HepG2 (cell line): ENCODE measurements at regions of chr14 and their contacts with region 1.

Region 1: DNA sequence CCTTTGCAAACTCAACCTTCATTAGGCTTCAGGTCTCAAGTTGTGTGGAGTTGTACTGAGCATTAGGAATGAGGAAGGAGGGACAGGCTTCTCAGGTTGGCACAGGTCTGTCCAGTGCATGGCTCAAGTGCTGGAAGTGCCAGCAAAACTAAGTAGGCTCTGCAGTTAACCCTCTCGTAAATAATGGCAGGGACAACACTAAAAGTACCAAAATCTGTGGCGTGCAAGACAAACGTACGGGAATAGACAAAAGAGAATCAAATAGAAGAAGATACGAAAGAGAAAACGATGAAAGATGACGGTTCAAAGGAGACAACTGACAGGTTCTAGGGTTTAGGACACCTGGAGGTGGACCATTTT is 612 bp downstream of the TRAPPC6B start:
- DNase-seq: no peak
- ATAC-seq: peak; percentile 44
- H3K4me3 ChIP-seq: peak overlapping the region; percentile 71 to 96 (median 90)
- H3K27ac ChIP-seq: peak overlapping the region; percentile 86
- H3K4me1 ChIP-seq: peaks cover 63% of the 10 kb centered on the region
- H3K27me3 ChIP-seq: peaks cover 0 to 7% of the 10 kb centered on the region in 2 experiments; a peak in 1 of 5 replicates
- CTCF ChIP-seq: no peak
- EP300 ChIP-seq: no peak
- POLR2A ChIP-seq: no peak
- RAD21 ChIP-seq: no peak

Region 2: GRCh38 chr14:38762426-38762825 is 407.1 kb before region 1 on chr14:
- CTCF ChIA-PET with region 1: no interaction called
- POLR2A ChIA-PET with region 1: no interaction called
- in situ Hi-C with region 1: no loop called
- intact Hi-C with region 1: no loop called
- DNase-seq: no peak
- ATAC-seq: no peak
- H3K4me3 ChIP-seq: no peak overlapping the region
- H3K27ac ChIP-seq: no peak overlapping the region
- H3K4me1 ChIP-seq: no peaks in the 10 kb centered on the region
- H3K27me3 ChIP-seq: no peaks in the 10 kb centered on the region
- CTCF ChIP-seq: no peak
- EP300 ChIP-seq: no peak
- POLR2A ChIP-seq: no peak
- RAD21 ChIP-seq: no peak

Region 3: GRCh38 chr14:39097159-39097558 is 72.4 kb before region 1 on chr14:
- CTCF ChIA-PET with region 1: no interaction called
- POLR2A ChIA-PET with region 1: interaction called, 285 read pairs
- in situ Hi-C with region 1: no loop called
- intact Hi-C with region 1: loop called (anchors 1 kb)
- DNase-seq: peak; percentile 90
- ATAC-seq: peak; percentile 70
- H3K4me3 ChIP-seq: 0 out of 6 replicates have a peak overlapping the region, but pooled peaks of 1 of the 3 experiments have one; percentile 2
- H3K27ac ChIP-seq: peak overlapping the region; percentile 36
- H3K4me1 ChIP-seq: peaks cover 76% of the 10 kb centered on the region
- H3K27me3 ChIP-seq: no peaks in the 10 kb centered on the region; a peak in 1 of 5 replicates
- CTCF ChIP-seq: no peak
- EP300 ChIP-seq: peak in 1 of 2 experiments; percentile 20; a peak in 2 of 4 replicates
- POLR2A ChIP-seq: peak in 1 of 2 experiments; percentile 33; a peak in 1 of 4 replicates
- RAD21 ChIP-seq: no peak

Region 4: DNA sequence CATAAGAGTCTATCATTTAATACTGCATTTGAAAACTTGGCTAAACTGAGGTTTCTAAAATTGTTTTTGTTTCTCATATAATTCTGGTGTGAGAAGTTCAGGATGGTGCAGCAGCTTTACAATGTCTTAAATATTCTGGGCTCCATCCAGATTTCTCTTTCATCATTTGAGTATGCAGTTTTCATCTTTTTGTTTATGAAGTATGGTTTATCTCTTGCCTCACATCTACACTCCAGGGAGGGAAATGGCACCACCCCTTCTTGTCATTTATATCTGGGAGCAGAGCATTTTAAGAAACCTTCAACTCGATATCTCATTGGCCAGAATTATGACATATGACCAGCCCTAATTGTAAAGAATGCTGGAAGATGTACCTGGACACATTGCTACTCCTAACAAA is 31.1 kb before region 1 on chr14:
- CTCF ChIA-PET with region 1: no interaction called
- POLR2A ChIA-PET with region 1: interaction called, 26 read pairs
- in situ Hi-C with region 1: no loop called
- intact Hi-C with region 1: no loop called
- DNase-seq: no peak
- ATAC-seq: no peak
- H3K4me3 ChIP-seq: no peak overlapping the region
- H3K27ac ChIP-seq: no peak overlapping the region
- H3K4me1 ChIP-seq: no peaks in the 10 kb centered on the region
- H3K27me3 ChIP-seq: no peaks in the 10 kb centered on the region
- CTCF ChIP-seq: no peak
- EP300 ChIP-seq: no peak
- POLR2A ChIP-seq: no peak
- RAD21 ChIP-seq: no peak

Region 5: GRCh38 chr14:39181026-39181692 is 11.6 kb after region 1 on chr14:
- CTCF ChIA-PET with region 1: no interaction called
- POLR2A ChIA-PET with region 1: interaction called, 99 read pairs
- in situ Hi-C with region 1: no loop called
- intact Hi-C with region 1: no loop called
- DNase-seq: no peak
- ATAC-seq: peak; percentile 14
- H3K4me3 ChIP-seq: no peak overlapping the region
- H3K27ac ChIP-seq: no peak overlapping the region
- H3K4me1 ChIP-seq: peaks cover 52% of the 10 kb centered on the region
- H3K27me3 ChIP-seq: no peaks in the 10 kb centered on the region
- CTCF ChIP-seq: no peak
- EP300 ChIP-seq: no peak
- POLR2A ChIP-seq: peak; percentile 46 to 48; a peak in 3 of 4 replicates
- RAD21 ChIP-seq: 0 out of 2 replicates have a peak, but pooled peaks have one; percentile 31

Region 6: DNA sequence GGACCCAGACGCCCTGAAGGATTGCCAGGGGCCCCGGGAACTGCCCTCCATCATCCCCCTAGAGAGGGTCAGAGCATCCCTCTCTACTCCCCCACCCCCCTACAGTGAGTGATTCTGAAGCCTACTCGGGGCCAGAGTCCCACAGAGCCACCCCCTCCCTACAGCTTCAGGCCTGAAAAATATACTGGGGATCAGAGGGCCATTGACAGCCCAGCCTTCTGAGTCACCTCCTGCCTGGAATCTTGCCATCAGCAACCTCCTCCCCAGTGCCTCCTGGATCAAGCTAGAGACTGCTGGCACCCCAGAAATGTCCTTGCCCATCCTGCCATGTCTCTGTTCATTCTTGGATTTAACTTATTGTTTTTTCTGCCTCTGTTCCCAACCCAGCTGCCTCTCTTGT is 42.5 kb after region 1 on chr14:
- CTCF ChIA-PET with region 1: no interaction called
- POLR2A ChIA-PET with region 1: interaction called, 15 read pairs
- in situ Hi-C with region 1: no loop called
- intact Hi-C with region 1: no loop called
- DNase-seq: no peak
- ATAC-seq: peak; percentile 67
- H3K4me3 ChIP-seq: no peak overlapping the region
- H3K27ac ChIP-seq: no peak overlapping the region
- H3K4me1 ChIP-seq: peaks cover 24% of the 10 kb centered on the region
- H3K27me3 ChIP-seq: no peaks in the 10 kb centered on the region; a peak in 1 of 5 replicates
- CTCF ChIP-seq: no peak
- EP300 ChIP-seq: no peak
- POLR2A ChIP-seq: no peak
- RAD21 ChIP-seq: no peak

Region 7: GRCh38 chr14:39432179-39432618 is 262.7 kb after region 1 on chr14 and contains the start of gene FBXO33:
- CTCF ChIA-PET with region 1: no interaction called
- POLR2A ChIA-PET with region 1: interaction called, 76 read pairs
- in situ Hi-C with region 1: no loop called
- intact Hi-C with region 1: loop called (anchors 2 kb)
- DNase-seq: peak; percentile 98
- ATAC-seq: peak; percentile 87
- H3K4me3 ChIP-seq: peak within 1 kb of the TSS; percentile 88 to 98 (median 94)
- H3K27ac ChIP-seq: peak within 1 kb of the TSS; percentile 98
- H3K4me1 ChIP-seq: peaks cover 37% of the 10 kb centered on the region
- H3K27me3 ChIP-seq: no peaks in the 10 kb centered on the region; a peak in 1 of 5 replicates
- CTCF ChIP-seq: no peak
- EP300 ChIP-seq: peak in 1 of 2 experiments; percentile 77; a peak in 2 of 4 replicates
- POLR2A ChIP-seq: no peak
- RAD21 ChIP-seq: peak; percentile 27; the same call in 1 of the 2 replicates
- total RNA-seq, gene FBXO33: 15.5 and 23.3 TPM in 2 replicates